GM12878 (cell line): ENCODE measurements at regions of chr6 and their contacts with region 1.

Region 1: GRCh38 chr6:13336553-13336952 is 8.2 kb upstream of the TBC1D7 start:
- DNase-seq: no peak
- ATAC-seq: peak; percentile 82
- H3K4me3 ChIP-seq: no peak overlapping the region
- H3K27ac ChIP-seq: no peak overlapping the region
- H3K4me1 ChIP-seq: peaks cover 15% of the 10 kb centered on the region; the same call in 1 of the 2 replicates
- H3K27me3 ChIP-seq: no peaks in the 10 kb centered on the region
- CTCF ChIP-seq: peak; percentile 90 to 95 (median 94); a peak in 5 of 6 replicates
- EP300 ChIP-seq: no peak
- POLR2A ChIP-seq: no peak
- RAD21 ChIP-seq: peak; percentile 98

Region 2: DNA sequence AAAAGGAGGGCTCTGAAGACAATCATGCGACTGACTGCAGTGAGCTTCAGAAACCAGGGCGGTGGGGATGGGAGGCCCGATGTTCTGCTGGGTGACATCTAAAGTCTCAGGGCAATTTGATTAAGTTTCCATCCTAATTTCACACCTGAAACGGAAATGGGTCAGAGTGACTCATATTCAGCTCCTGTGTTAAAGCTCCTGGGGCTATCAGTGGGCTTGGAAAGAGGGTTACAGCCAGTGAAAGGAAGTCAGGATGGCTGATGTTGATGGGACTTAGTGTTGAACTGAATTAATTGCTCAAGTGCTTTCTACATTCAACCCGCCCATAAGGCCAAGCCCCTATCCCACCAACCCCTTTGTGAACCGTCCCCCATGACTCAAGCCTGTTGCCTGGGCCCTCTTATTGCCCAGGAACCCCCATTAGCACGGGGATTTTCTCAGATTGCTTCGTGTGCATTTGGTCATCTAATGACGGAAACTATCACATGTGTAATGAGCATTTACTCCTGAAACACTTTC is 38.9 kb after region 1 on chr6:
- CTCF ChIA-PET with region 1: interaction called, 29 read pairs
- POLR2A ChIA-PET with region 1: interaction called, 5 read pairs
- RAD21 ChIA-PET with region 1: interaction called, 22 read pairs
- SMC1A ChIA-PET with region 1: interaction called, 72 read pairs
- in situ Hi-C with region 1: no loop called
- intact Hi-C with region 1: loop called (anchors 2 kb)
- DNase-seq: peak; percentile 95
- ATAC-seq: peak; percentile 88
- H3K4me3 ChIP-seq: no peak overlapping the region
- H3K27ac ChIP-seq: peak overlapping the region; percentile 98
- H3K4me1 ChIP-seq: peaks cover 65% of the 10 kb centered on the region
- H3K27me3 ChIP-seq: no peaks in the 10 kb centered on the region
- CTCF ChIP-seq: no peak
- EP300 ChIP-seq: peak; percentile 72 to 82; a peak in 3 of 4 replicates
- POLR2A ChIP-seq: peak; percentile 38; the same call in 1 of the 2 replicates
- RAD21 ChIP-seq: no peak

Region 3: DNA sequence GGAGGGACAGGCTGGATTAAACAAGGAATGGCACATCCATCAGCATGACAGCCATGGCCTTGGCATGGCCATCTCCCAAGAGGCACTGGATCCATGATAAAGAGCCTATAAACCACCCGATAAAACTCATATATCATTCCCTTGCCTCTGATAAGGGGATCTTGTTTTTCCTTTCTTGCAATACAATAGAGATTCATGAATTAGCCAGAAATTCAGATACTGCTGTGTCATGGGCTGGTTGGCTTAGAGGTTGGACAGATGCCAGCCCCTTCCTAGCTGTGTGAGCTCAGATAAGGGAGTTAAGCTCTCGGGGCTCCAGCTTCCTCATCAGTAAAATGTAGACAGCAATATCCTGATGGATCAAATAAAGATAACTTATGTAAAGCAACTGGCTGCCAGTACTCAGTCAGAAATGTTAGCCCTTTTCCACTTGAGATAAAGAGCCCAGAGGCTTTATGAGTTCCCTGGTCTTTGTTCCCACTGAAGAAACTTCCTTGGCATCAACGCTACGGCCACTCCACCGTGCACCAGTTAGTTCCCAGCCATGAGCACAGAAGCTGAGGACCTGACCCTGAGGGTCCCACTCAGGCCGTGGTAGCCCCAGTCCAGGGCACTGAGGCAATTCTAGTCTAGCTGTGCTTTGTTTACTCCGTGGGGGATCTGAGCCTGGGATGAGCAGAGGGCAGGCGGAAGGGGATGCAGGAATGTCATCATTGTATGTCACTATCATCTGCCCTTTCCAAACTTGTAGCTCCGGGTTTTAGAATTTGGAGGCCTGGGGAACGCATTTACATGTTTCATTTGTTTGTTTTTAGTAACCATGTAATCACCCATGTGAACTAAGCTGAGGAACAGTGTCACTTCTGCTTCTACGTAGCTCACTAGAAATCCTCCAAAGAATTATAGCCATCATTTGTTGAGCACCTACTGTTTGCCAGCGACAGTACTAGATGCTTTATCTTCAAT is 59.0 kb after region 1 on chr6:
- CTCF ChIA-PET with region 1: interaction called, 4 read pairs
- POLR2A ChIA-PET with region 1: interaction called, 3 read pairs
- RAD21 ChIA-PET with region 1: interaction called, 4 read pairs
- SMC1A ChIA-PET with region 1: interaction called, 11 read pairs
- in situ Hi-C with region 1: no loop called
- intact Hi-C with region 1: no loop called
- DNase-seq: no peak
- ATAC-seq: peak; percentile 65
- H3K4me3 ChIP-seq: no peak overlapping the region; the same call in 1 of the 2 replicates
- H3K27ac ChIP-seq: peak overlapping the region; percentile 76
- H3K4me1 ChIP-seq: peaks cover 38% of the 10 kb centered on the region
- H3K27me3 ChIP-seq: no peaks in the 10 kb centered on the region
- CTCF ChIP-seq: no peak
- EP300 ChIP-seq: 0 out of 4 replicates have a peak, but pooled peaks of 1 of the 2 experiments have one; percentile 45
- POLR2A ChIP-seq: no peak
- RAD21 ChIP-seq: no peak

Region 4: DNA sequence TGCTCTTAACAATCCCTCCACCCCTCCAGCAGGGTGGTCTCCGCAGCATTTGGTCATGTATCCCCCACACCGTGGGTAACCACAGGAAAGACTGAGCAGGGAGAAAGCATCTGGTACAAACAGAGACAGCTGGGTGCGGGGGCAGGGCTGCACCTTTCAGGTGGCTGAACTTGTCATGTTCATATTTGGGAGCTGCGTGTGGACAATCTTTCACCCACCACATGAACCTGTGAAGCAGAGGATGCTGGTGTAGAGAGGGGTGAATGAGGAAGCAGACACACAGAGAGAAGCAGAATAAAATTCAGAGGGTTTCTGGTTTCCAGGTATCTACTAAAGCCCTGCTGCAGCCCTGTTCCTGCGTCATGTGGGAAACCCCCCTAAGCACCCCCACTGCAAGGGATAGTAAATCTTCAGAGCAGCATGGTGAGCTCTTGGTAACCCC is 142.0 kb after region 1 on chr6:
- CTCF ChIA-PET with region 1: no interaction called
- POLR2A ChIA-PET with region 1: interaction called, 3 read pairs
- RAD21 ChIA-PET with region 1: interaction called, 5 read pairs
- SMC1A ChIA-PET with region 1: interaction called, 21 read pairs
- in situ Hi-C with region 1: no loop called
- intact Hi-C with region 1: no loop called
- DNase-seq: no peak
- ATAC-seq: peak; percentile 56
- H3K4me3 ChIP-seq: 0 out of 2 replicates have a peak overlapping the region, but pooled peaks have one; percentile 1
- H3K27ac ChIP-seq: peak overlapping the region; percentile 63
- H3K4me1 ChIP-seq: peaks cover 48% of the 10 kb centered on the region
- H3K27me3 ChIP-seq: no peaks in the 10 kb centered on the region
- CTCF ChIP-seq: no peak
- EP300 ChIP-seq: no peak
- POLR2A ChIP-seq: no peak
- RAD21 ChIP-seq: no peak

Region 5: GRCh38 chr6:13531945-13532344 is 195.4 kb after region 1 on chr6:
- CTCF ChIA-PET with region 1: interaction called, 47 read pairs
- POLR2A ChIA-PET with region 1: no interaction called
- RAD21 ChIA-PET with region 1: interaction called, 21 read pairs
- SMC1A ChIA-PET with region 1: interaction called, 54 read pairs
- in situ Hi-C with region 1: no loop called
- intact Hi-C with region 1: no loop called
- DNase-seq: no peak
- ATAC-seq: no peak
- H3K4me3 ChIP-seq: no peak overlapping the region
- H3K27ac ChIP-seq: no peak overlapping the region
- H3K4me1 ChIP-seq: peaks cover 3% of the 10 kb centered on the region
- H3K27me3 ChIP-seq: no peaks in the 10 kb centered on the region
- CTCF ChIP-seq: no peak
- EP300 ChIP-seq: no peak
- POLR2A ChIP-seq: no peak
- RAD21 ChIP-seq: no peak

Region 6: DNA sequence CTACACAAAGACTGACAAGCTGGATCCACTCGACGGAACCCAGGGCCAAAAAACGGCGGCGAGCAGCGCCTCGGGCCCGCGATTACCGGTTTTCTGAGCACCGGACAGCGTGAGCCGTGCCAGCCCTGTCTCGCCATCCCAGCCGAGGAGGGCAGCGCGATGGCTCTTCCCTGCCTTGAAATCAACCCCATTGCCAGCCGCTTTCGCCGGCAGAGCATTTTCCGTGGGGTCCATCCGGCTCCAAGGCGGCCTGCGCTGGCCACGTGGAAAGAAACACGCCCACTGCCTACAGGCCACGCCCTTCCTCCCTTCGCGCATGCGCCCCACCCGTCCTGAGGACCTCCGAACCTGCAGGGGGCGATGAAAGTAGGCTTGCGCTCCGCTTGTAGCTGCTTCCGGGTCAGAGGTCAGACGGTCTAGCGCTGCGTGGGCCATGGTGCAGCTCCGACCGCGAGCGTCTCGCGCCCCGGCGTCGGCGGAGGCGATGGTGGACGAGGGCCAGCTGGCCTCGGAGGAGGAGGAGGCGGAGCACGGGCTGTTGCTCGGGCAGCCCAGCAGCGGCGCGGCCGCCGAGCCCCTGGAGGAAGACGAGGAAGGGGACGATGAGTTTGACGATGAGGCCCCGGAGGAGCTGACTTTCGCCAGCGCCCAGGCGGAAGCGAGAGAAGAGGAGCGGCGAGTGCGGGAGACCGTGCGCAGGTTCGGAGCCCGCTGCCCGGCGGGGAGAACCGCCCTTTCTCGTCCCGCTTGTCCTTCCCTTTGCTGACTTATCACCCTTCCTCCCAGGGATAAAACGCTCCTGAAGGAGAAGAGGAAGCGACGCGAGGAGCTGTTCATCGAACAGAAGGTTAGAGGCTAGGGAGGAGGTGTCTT is 278.6 kb after region 1 on chr6 and contains the start of gene NOL7:
- CTCF ChIA-PET with region 1: interaction called, 18 read pairs
- POLR2A ChIA-PET with region 1: no interaction called
- RAD21 ChIA-PET with region 1: interaction called, 7 read pairs
- SMC1A ChIA-PET with region 1: interaction called, 9 read pairs
- in situ Hi-C with region 1: no loop called
- intact Hi-C with region 1: loop called (anchors 1 kb)
- DNase-seq: peak; percentile 95
- ATAC-seq: peak; percentile 91
- H3K4me3 ChIP-seq: peak within 1 kb of the TSS; percentile 94
- H3K27ac ChIP-seq: peak within 1 kb of the TSS; percentile 96
- H3K4me1 ChIP-seq: peaks cover 17% of the 10 kb centered on the region
- H3K27me3 ChIP-seq: no peaks in the 10 kb centered on the region
- CTCF ChIP-seq: peak; percentile 96 to 99 (median 98); a peak in 5 of 6 replicates
- EP300 ChIP-seq: no peak
- POLR2A ChIP-seq: peak; percentile 99
- RAD21 ChIP-seq: no peak
- polyA plus RNA-seq, gene NOL7: 12.2 to 31.2 TPM